ENCODE measurements at regions of chr9 and their contacts with region 1.

Region 1: GRCh38 chr9:72364679-72365524 is at the start of gene ZFAND5:
- DNase-seq: peak; percentile 91 to 95 (median 92)
- H3K4me3 ChIP-seq: peak within 1 kb of the TSS; percentile 99
- H3K4me3 Mint-ChIP-seq: peak within 1 kb of the TSS; percentile 91 to 98 (median 96)
- H3K27ac ChIP-seq: peak within 1 kb of the TSS; percentile 99
- H3K27ac Mint-ChIP-seq: peak within 1 kb of the TSS; percentile 93 to 100 (median 98)
- H3K4me1 ChIP-seq: peaks cover 34% of the 10 kb centered on the region
- H3K4me1 Mint-ChIP-seq: peaks cover 44 to 50% (median 47%) of the 10 kb centered on the region in 3 donors
- H3K27me3 ChIP-seq: no peaks in the 10 kb centered on the region
- H3K27me3 Mint-ChIP-seq: no peaks in the 10 kb centered on the region
- total RNA-seq, gene ZFAND5: 91.0 to 98.8 TPM

Region 2: GRCh38 chr9:72262063-72262462 is 102.8 kb before region 1 on chr9:
- CTCF ChIA-PET with region 1: no interaction called
- POLR2A ChIA-PET with region 1: no interaction called
- DNase-seq: no peak
- H3K4me3 ChIP-seq: no peak overlapping the region
- H3K4me3 Mint-ChIP-seq: no peak overlapping the region
- H3K27ac ChIP-seq: no peak overlapping the region
- H3K27ac Mint-ChIP-seq: no peak overlapping the region
- H3K4me1 ChIP-seq: no peaks in the 10 kb centered on the region
- H3K4me1 Mint-ChIP-seq: no peaks in the 10 kb centered on the region
- H3K27me3 ChIP-seq: no peaks in the 10 kb centered on the region
- H3K27me3 Mint-ChIP-seq: peaks cover 4 to 40% of the 10 kb centered on the region in 2 donors

Region 3: GRCh38 chr9:72333709-72334108 is 31.2 kb before region 1 on chr9:
- CTCF ChIA-PET with region 1: no interaction called
- POLR2A ChIA-PET with region 1: no interaction called
- DNase-seq: no peak
- H3K4me3 ChIP-seq: no peak overlapping the region
- H3K4me3 Mint-ChIP-seq: no peak overlapping the region
- H3K27ac ChIP-seq: no peak overlapping the region
- H3K27ac Mint-ChIP-seq: no peak overlapping the region
- H3K4me1 ChIP-seq: no peaks in the 10 kb centered on the region
- H3K4me1 Mint-ChIP-seq: no peaks in the 10 kb centered on the region
- H3K27me3 ChIP-seq: no peaks in the 10 kb centered on the region
- H3K27me3 Mint-ChIP-seq: peaks cover 4 to 13% of the 10 kb centered on the region in 2 donors

Region 4: GRCh38 chr9:72349240-72349639 is 15.7 kb before region 1 on chr9:
- CTCF ChIA-PET with region 1: no interaction called
- POLR2A ChIA-PET with region 1: no interaction called
- DNase-seq: no peak
- H3K4me3 ChIP-seq: no peak overlapping the region
- H3K4me3 Mint-ChIP-seq: no peak overlapping the region
- H3K27ac ChIP-seq: no peak overlapping the region
- H3K27ac Mint-ChIP-seq: no peak overlapping the region
- H3K4me1 ChIP-seq: no peaks in the 10 kb centered on the region
- H3K4me1 Mint-ChIP-seq: peaks cover 3 to 9% (median 4%) of the 10 kb centered on the region in 3 donors
- H3K27me3 ChIP-seq: no peaks in the 10 kb centered on the region
- H3K27me3 Mint-ChIP-seq: peaks cover 0 to under 1% of the 10 kb centered on the region in 2 donors

Region 5: GRCh38 chr9:72401396-72401795 is 36.5 kb after region 1 on chr9:
- CTCF ChIA-PET with region 1: no interaction called
- POLR2A ChIA-PET with region 1: no interaction called
- DNase-seq: no peak
- H3K4me3 ChIP-seq: no peak overlapping the region
- H3K4me3 Mint-ChIP-seq: no peak overlapping the region
- H3K27ac ChIP-seq: no peak overlapping the region
- H3K27ac Mint-ChIP-seq: no peak overlapping the region
- H3K4me1 ChIP-seq: no peaks in the 10 kb centered on the region
- H3K4me1 Mint-ChIP-seq: no peaks in the 10 kb centered on the region
- H3K27me3 ChIP-seq: no peaks in the 10 kb centered on the region
- H3K27me3 Mint-ChIP-seq: no peaks in the 10 kb centered on the region

Region 6: GRCh38 chr9:72443855-72444254 is 79.0 kb after region 1 on chr9:
- CTCF ChIA-PET with region 1: no interaction called
- POLR2A ChIA-PET with region 1: interaction called, 14 read pairs
- DNase-seq: peak in 1 of 5 donors; percentile 44
- H3K4me3 ChIP-seq: no peak overlapping the region
- H3K4me3 Mint-ChIP-seq: peak overlapping the region in 2 of 7 donors; percentile 25 to 44
- H3K27ac ChIP-seq: no peak overlapping the region
- H3K27ac Mint-ChIP-seq: peak overlapping the region in 7 of 8 donors; percentile 20 to 90 (median 78)
- H3K4me1 ChIP-seq: peaks cover 10% of the 10 kb centered on the region
- H3K4me1 Mint-ChIP-seq: peaks cover 20 to 38% (median 27%) of the 10 kb centered on the region in 3 donors
- H3K27me3 ChIP-seq: no peaks in the 10 kb centered on the region
- H3K27me3 Mint-ChIP-seq: no peaks in the 10 kb centered on the region

Region 7: DNA sequence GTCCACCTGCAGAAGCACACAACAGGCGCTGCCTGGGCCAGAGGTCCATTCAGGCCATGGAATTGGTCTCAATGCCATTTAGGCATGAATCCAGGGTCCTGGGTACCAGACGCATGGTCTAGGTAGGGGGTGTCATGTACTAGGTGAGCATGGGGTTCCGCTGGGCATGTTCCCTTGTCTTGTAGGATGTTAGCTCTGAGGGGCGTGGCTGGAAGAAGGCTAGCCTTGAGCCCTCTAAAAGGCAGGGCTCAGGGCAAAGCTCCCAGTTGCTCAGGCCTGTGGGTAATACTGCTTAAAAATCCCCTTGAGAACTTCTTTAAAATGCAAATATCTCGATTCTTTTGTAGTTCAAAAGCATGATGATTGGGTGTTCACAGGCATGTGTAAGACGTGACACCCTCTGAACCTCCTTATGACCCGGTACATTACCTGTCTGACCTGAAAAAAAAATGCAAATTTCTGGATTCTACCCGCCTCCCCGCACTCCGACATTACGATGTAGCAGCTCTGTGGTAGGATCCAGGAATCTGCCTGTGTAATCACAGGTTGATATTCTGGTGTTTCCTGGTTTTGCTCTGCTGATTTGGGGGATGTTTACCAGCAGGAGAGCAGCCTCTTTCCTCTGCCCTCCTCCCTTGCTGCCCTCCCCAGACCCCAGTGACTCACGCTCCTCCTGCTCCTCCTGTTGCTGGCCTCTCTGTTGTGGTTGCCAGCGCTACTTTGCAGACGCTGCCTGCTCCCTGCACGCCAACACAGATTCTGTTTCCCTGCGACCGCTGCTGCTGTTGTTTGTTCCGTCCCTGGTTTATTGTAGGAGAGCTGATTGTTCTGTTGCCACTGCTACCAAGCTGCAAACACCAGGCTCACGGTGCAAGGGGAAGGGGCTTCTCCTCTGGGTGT is 162.2 kb after region 1 on chr9:
- CTCF ChIA-PET with region 1: no interaction called
- POLR2A ChIA-PET with region 1: interaction called, 15 read pairs
- DNase-seq: peak; percentile 53 to 86 (median 66)
- H3K4me3 ChIP-seq: peak overlapping the region; percentile 53
- H3K4me3 Mint-ChIP-seq: peak overlapping the region; percentile 57 to 89 (median 83)
- H3K27ac ChIP-seq: peak overlapping the region; percentile 60
- H3K27ac Mint-ChIP-seq: peak overlapping the region; percentile 82 to 97 (median 92)
- H3K4me1 ChIP-seq: peaks cover 23% of the 10 kb centered on the region
- H3K4me1 Mint-ChIP-seq: peaks cover 20 to 32% (median 29%) of the 10 kb centered on the region in 3 donors
- H3K27me3 ChIP-seq: no peaks in the 10 kb centered on the region
- H3K27me3 Mint-ChIP-seq: no peaks in the 10 kb centered on the region